Panc1 (cell line): ENCODE measurements at regions of chr11 and their contacts with region 1.

Region 1: DNA sequence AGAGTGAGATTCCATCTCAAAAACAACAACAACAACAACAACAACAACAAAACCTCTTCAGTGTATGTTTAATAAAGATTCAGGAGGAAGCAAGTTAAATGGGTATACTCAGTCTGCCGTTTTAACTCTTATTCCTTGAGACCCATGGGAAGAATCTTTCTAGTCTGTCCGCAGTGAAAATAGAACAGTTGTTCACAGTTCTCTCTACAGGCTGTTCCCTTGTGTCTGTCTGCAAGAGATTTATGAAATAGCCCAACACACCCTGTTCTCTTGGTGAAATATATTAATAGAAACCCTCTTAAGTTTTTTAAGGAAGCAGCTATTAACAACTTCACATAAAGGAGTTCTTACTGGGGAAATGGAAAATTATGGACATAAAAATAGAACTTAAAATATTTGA is 682.2 kb upstream of the RAG2 start:
- DNase-seq: no peak
- ATAC-seq: no peak
- H3K4me3 ChIP-seq: no peak overlapping the region
- H3K27ac ChIP-seq: no peak overlapping the region
- H3K4me1 ChIP-seq: no peaks in the 10 kb centered on the region
- H3K27me3 ChIP-seq: no peaks in the 10 kb centered on the region
- CTCF ChIP-seq: no peak

Region 2: DNA sequence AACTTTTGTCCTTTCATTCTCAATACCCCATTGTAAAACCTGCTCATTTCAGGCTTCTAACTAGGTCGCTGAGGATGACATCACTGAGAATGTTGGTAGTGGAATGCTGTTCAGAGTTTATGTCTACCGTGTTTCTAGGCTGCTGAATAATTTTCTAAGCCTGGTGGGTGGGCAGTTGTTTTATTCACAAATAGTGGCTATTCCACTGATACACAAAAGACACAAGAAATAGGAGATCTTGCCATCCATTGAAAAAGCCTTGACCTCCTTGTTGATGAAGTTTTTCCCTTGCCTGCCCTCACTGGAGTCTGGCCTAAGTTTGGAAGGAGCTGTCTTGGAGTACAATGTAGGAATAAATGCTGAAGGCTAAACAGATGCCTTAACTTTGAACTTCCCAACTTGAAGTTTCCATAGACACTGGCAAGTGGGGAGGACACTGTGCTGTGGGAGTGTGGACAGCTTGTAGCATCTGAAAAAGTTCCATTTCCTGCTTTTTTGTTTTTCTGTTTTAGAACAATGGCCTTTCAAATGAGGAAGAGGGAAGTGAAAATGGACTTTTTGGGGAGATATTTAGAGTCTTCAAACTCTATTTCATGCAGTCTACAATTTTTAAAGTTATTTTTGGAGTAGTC is 1558.4 kb before region 1 on chr11:
- CTCF ChIA-PET with region 1: interaction called, 10 read pairs
- POLR2A ChIA-PET with region 1: no interaction called
- in situ Hi-C with region 1: no loop called
- intact Hi-C with region 1: no loop called
- DNase-seq: no peak
- ATAC-seq: no peak
- H3K4me3 ChIP-seq: no peak overlapping the region
- H3K27ac ChIP-seq: no peak overlapping the region
- H3K4me1 ChIP-seq: no peaks in the 10 kb centered on the region
- H3K27me3 ChIP-seq: no peaks in the 10 kb centered on the region
- CTCF ChIP-seq: no peak